CD8-positive, alpha-beta T cell (primary cell): ENCODE measurements at regions of chr19 and their contacts with region 1.

Region 1: DNA sequence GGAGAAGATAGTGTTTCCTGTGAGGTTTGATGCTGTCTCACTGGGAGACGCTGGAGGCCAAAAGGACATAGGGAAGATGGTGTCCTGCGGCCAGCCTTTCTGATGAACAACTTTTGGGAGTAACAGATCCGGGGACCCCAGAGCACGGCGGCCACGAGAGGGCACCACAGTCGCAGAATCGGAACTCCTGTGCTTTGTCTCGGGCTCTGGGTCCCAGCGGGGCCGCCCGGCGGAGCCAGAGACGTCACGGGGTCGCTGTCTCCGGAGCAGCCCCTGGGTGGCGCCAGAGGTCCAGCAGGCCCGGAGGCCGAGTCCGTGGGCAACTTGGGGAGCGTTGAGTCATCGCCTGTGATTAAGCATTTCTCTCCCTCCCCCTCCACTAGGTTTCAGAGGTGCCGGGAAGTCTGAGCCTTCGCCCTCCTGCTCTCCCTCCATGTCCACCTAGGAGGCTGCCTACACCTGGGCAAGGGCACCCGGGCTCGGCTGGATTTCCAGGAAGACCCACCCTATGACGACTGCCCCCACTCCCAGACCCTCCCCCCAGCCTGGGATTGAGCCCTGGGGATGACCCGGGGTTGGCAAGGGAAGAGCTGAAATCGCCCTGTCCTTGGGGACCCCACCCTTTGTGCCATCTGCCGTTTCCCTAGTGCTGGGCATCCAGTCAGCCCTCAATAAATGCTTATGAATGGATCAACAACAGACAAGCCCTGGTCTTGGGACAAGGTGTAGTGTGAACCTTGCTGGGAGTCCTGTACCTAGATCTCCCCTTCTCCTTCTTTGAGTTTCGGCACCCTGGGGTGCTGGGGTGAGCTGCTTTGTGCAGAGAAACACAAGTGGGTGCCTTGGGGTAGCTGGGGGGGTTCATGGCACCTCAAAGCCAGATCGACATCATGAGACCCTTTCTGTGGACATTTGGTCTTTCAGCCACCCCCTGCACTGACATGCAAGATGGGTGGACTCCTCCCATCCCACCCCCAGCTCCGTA is 3.4 kb downstream of the NANOS3 start:
- DNase-seq: peak; percentile 96 to 99 (median 98)
- ATAC-seq: peak; percentile 96
- H3K4me3 ChIP-seq: peak overlapping the region; percentile 13 to 20
- H3K4me3 Mint-ChIP-seq: peak overlapping the region; percentile 69
- H3K27ac ChIP-seq: peak overlapping the region in 1 of 2 experiments; percentile 61
- H3K27ac Mint-ChIP-seq: peak overlapping the region; percentile 66
- H3K4me1 ChIP-seq: peaks cover 51% of the 10 kb centered on the region
- H3K4me1 Mint-ChIP-seq: peaks cover 43% of the 10 kb centered on the region
- H3K27me3 ChIP-seq: no peaks in the 10 kb centered on the region
- H3K27me3 Mint-ChIP-seq: no peaks in the 10 kb centered on the region
- CTCF ChIP-seq: peak; percentile 99

Region 2: GRCh38 chr19:13241231-13242104 is 638.9 kb before region 1 on chr19:
- CTCF ChIA-PET with region 1: no interaction called
- POLR2A ChIA-PET with region 1: no interaction called
- intact Hi-C with region 1: no loop called
- DNase-seq: peak in 7 of 9 experiments; percentile 8 to 72 (median 47)
- ATAC-seq: peak; percentile 84
- H3K4me3 ChIP-seq: no peak overlapping the region
- H3K4me3 Mint-ChIP-seq: peak overlapping the region; percentile 63
- H3K27ac ChIP-seq: no peak overlapping the region
- H3K27ac Mint-ChIP-seq: no peak overlapping the region
- H3K4me1 ChIP-seq: peaks cover 14% of the 10 kb centered on the region
- H3K4me1 Mint-ChIP-seq: peaks cover 19% of the 10 kb centered on the region
- H3K27me3 ChIP-seq: no peaks in the 10 kb centered on the region
- H3K27me3 Mint-ChIP-seq: no peaks in the 10 kb centered on the region
- CTCF ChIP-seq: no peak

Region 3: DNA sequence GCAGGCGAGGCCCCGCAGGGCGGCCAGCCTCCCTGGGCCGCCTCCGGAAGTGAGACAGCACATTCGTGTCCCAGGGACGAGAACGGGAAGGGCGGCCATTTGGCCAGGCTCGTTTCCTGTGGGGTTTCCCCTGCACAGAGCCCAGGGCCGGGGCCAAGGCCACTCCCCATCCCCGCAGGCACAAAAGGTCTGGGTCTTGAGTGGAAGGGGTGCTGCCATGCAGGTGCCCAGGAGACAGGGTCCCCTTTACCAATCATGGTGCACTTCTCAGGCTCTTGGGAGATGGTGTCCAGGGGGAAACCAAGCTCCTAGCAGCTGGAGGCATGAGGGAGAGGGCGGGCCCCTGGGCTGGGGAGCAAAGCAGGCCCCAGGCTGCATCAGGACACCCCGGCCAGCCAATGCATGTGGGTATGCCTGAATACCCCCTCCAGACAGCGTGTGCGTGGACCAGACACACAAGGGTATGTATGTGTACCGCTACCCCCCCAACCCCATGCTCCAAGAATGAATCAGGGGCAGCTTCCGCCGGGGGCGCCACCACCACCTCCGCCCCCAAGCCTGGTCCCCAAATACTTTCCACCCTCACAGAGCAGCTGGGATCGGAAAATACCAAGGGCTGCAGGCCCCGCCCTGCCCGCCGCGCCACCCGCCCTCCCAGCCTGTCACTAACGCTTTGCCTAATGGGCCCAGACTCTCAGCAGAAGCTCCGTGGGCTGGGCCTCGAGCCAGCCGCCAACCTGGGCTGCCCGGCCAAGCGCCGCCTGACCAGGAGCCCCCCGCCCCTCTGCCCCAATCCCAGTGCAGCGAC is 41.0 kb before region 1 on chr19:
- CTCF ChIA-PET with region 1: no interaction called
- POLR2A ChIA-PET with region 1: no interaction called
- intact Hi-C with region 1: no loop called
- DNase-seq: peak in 8 of 9 experiments; percentile 64 to 89 (median 80)
- ATAC-seq: peak; percentile 45
- H3K4me3 ChIP-seq: peak overlapping the region; percentile 62 to 67
- H3K4me3 Mint-ChIP-seq: peak overlapping the region; percentile 88
- H3K27ac ChIP-seq: peak overlapping the region; percentile 78 to 96
- H3K27ac Mint-ChIP-seq: peak overlapping the region; percentile 95
- H3K4me1 ChIP-seq: peaks cover 82% of the 10 kb centered on the region
- H3K4me1 Mint-ChIP-seq: peaks cover 69% of the 10 kb centered on the region
- H3K27me3 ChIP-seq: no peaks in the 10 kb centered on the region
- H3K27me3 Mint-ChIP-seq: no peaks in the 10 kb centered on the region
- CTCF ChIP-seq: no peak

Region 4: DNA sequence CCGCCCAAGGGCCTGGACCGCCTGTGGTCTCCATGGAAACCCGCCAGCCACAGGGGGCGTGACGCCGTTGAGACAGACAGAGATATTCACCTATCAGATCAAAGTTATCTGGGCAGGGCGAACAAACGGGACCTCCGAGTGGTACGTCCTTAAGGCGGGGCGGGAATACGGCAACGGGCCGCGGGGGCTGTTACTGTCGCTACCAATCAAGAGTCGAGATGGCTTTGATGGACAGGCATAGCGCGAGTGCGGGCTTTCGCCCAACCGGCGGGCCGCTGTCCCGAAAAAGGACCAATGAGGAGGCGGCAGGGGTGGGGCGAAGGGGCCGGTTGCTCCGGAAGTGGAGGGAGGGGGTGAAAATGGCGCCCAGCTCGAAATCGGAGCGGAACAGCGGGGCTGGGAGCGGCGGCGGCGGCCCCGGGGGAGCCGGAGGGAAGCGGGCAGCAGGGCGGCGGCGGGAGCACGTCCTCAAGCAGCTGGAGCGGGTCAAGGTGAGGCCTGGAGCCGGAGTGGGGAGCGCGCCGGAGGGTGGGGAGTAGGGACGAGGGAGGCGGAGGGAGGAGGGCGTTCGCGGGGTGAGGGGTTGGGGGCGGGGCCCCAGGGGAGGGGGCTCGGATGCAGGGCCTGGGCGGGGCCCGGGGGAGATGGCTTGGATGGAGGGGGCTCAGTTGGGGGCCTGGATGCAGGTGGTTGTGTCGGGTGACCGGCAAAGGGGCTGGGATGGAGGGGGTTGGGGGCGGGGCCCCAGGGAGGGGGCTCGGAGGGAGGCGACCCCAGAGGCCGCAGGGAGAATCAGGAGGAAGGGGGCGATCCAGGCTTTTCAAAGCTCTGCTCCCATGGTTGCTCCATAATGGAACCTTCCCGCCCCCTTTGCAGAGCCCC is 72.0 kb after region 1 on chr19 and contains the start of gene DCAF15:
- CTCF ChIA-PET with region 1: interaction called, 6 read pairs
- POLR2A ChIA-PET with region 1: interaction called, 3 read pairs
- intact Hi-C with region 1: loop called (anchors 1 kb)
- DNase-seq: peak; percentile 96 to 100 (median 99)
- ATAC-seq: peak; percentile 96
- H3K4me3 ChIP-seq: peak within 1 kb of the TSS; percentile 63 to 73
- H3K4me3 Mint-ChIP-seq: peak within 1 kb of the TSS; percentile 96
- H3K27ac ChIP-seq: peak within 1 kb of the TSS; percentile 76 to 78
- H3K27ac Mint-ChIP-seq: peak within 1 kb of the TSS; percentile 92
- H3K4me1 ChIP-seq: peaks cover 14% of the 10 kb centered on the region
- H3K4me1 Mint-ChIP-seq: peaks cover 21% of the 10 kb centered on the region
- H3K27me3 ChIP-seq: no peaks in the 10 kb centered on the region
- H3K27me3 Mint-ChIP-seq: no peaks in the 10 kb centered on the region
- CTCF ChIP-seq: no peak
- total RNA-seq, gene DCAF15: 86.5 to 101 TPM

Region 5: GRCh38 chr19:14015524-14016035 is 135.2 kb after region 1 on chr19:
- CTCF ChIA-PET with region 1: no interaction called
- POLR2A ChIA-PET with region 1: no interaction called
- intact Hi-C with region 1: no loop called
- DNase-seq: peak in 1 of 9 experiments; percentile 50
- ATAC-seq: peak; percentile 17
- H3K4me3 ChIP-seq: no peak overlapping the region
- H3K4me3 Mint-ChIP-seq: no peak overlapping the region
- H3K27ac ChIP-seq: peak overlapping the region in 1 of 2 experiments; percentile 25
- H3K27ac Mint-ChIP-seq: no peak overlapping the region
- H3K4me1 ChIP-seq: no peaks in the 10 kb centered on the region
- H3K4me1 Mint-ChIP-seq: peaks cover 3% of the 10 kb centered on the region
- H3K27me3 ChIP-seq: no peaks in the 10 kb centered on the region
- H3K27me3 Mint-ChIP-seq: no peaks in the 10 kb centered on the region
- CTCF ChIP-seq: no peak

Region 6: DNA sequence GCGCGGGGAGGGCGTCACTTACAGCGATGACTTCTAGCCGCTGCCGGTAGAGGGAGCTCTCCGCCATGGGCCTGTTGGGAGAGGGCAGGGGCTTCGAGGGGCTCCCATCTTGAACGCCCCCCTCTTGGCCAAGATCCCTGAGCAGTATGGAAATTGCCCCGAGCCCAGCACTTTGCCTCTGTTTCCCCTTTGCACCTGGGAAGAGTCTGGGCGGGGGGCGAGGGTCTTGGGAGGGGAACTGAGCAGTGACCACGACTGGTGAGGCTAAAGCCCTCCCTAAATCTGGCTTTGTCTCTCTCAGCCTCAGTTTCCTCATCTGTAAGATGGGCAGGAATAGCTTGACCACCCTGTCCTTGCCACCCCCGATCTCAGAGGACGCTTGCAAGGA is 178.7 kb after region 1 on chr19:
- CTCF ChIA-PET with region 1: interaction called, 17 read pairs
- POLR2A ChIA-PET with region 1: interaction called, 3 read pairs
- intact Hi-C with region 1: no loop called
- DNase-seq: peak in 8 of 9 experiments; percentile 22 to 72 (median 58)
- ATAC-seq: peak; percentile 65
- H3K4me3 ChIP-seq: no peak overlapping the region
- H3K4me3 Mint-ChIP-seq: no peak overlapping the region
- H3K27ac ChIP-seq: no peak overlapping the region
- H3K27ac Mint-ChIP-seq: no peak overlapping the region
- H3K4me1 ChIP-seq: peaks cover 15% of the 10 kb centered on the region
- H3K4me1 Mint-ChIP-seq: peaks cover 18% of the 10 kb centered on the region
- H3K27me3 ChIP-seq: peaks cover 20% of the 10 kb centered on the region in 2 experiments
- H3K27me3 Mint-ChIP-seq: peaks cover 38% of the 10 kb centered on the region
- CTCF ChIP-seq: peak; percentile 72

Region 7: GRCh38 chr19:14117668-14118164 is 237.4 kb after region 1 on chr19 and contains the start of gene PRKACA:
- CTCF ChIA-PET with region 1: interaction called, 6 read pairs
- POLR2A ChIA-PET with region 1: no interaction called
- intact Hi-C with region 1: loop called in 1 of 2 experiments (anchors 1 kb)
- DNase-seq: peak; percentile 95 to 99 (median 98)
- ATAC-seq: peak; percentile 90
- H3K4me3 ChIP-seq: peak within 1 kb of the TSS; percentile 67 to 72
- H3K4me3 Mint-ChIP-seq: peak within 1 kb of the TSS; percentile 94
- H3K27ac ChIP-seq: peak within 1 kb of the TSS; percentile 52 to 86
- H3K27ac Mint-ChIP-seq: peak within 1 kb of the TSS; percentile 99
- H3K4me1 ChIP-seq: peaks cover 42% of the 10 kb centered on the region
- H3K4me1 Mint-ChIP-seq: peaks cover 41% of the 10 kb centered on the region
- H3K27me3 ChIP-seq: no peaks in the 10 kb centered on the region
- H3K27me3 Mint-ChIP-seq: no peaks in the 10 kb centered on the region
- CTCF ChIP-seq: no peak
- total RNA-seq, gene PRKACA: 37.0 to 40.8 TPM

Region 8: GRCh38 chr19:14167576-14168138 is 287.3 kb after region 1 on chr19:
- CTCF ChIA-PET with region 1: no interaction called
- POLR2A ChIA-PET with region 1: no interaction called
- intact Hi-C with region 1: no loop called
- DNase-seq: peak in 7 of 9 experiments; percentile 19 to 71 (median 44)
- ATAC-seq: peak; percentile 72
- H3K4me3 ChIP-seq: peak overlapping the region; percentile 40 to 44
- H3K4me3 Mint-ChIP-seq: peak overlapping the region; percentile 86
- H3K27ac ChIP-seq: peak overlapping the region; percentile 46 to 53
- H3K27ac Mint-ChIP-seq: peak overlapping the region; percentile 84
- H3K4me1 ChIP-seq: peaks cover 31% of the 10 kb centered on the region
- H3K4me1 Mint-ChIP-seq: peaks cover 23% of the 10 kb centered on the region
- H3K27me3 ChIP-seq: no peaks in the 10 kb centered on the region
- H3K27me3 Mint-ChIP-seq: no peaks in the 10 kb centered on the region
- CTCF ChIP-seq: no peak

Region 9: GRCh38 chr19:14405758-14406644 is 525.6 kb after region 1 on chr19:
- CTCF ChIA-PET with region 1: no interaction called
- POLR2A ChIA-PET with region 1: no interaction called
- intact Hi-C with region 1: loop called in 1 of 2 experiments (anchors 2 kb)
- DNase-seq: peak; percentile 75 to 95 (median 88)
- ATAC-seq: peak; percentile 83
- H3K4me3 ChIP-seq: no peak overlapping the region
- H3K4me3 Mint-ChIP-seq: no peak overlapping the region
- H3K27ac ChIP-seq: peak overlapping the region; percentile 19 to 62
- H3K27ac Mint-ChIP-seq: peak overlapping the region; percentile 71
- H3K4me1 ChIP-seq: peaks cover 37% of the 10 kb centered on the region
- H3K4me1 Mint-ChIP-seq: peaks cover 22% of the 10 kb centered on the region
- H3K27me3 ChIP-seq: no peaks in the 10 kb centered on the region
- H3K27me3 Mint-ChIP-seq: no peaks in the 10 kb centered on the region
- CTCF ChIP-seq: peak; percentile 91